ENCODE measurements at regions of chr12 and their contacts with region 1.

Region 1: DNA sequence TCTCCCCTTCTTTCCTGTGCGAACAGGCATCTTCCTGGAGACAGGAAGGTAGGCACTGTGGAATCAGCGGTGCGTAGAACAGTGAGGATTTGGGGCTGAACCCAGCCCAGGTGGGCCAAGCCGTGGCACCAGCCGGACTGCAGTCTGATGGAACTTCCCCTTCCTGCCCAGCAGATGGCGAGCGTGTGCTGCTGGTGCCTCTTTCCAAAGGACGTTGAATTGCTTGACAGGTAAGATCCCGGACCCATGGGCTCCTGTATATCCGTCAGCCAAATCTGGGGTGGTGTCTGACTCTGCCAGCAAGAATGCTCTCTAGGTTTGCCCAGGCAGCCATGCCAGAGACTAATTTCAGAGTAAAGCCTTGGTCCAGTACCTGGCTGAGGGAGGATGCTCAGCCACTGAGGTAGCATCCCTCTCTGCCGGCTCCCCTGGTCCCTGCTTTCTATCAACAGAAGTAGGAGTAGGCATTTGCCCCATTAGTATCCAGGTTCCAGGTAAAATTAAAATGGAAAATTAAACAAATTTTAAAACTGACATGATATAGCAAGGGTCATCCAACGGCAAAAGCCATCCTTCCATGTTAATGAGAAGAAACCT is 21.1 kb upstream of the KCNA5 start:
- DNase-seq: peak; percentile 70
- ATAC-seq: peak; percentile 46

Region 2: DNA sequence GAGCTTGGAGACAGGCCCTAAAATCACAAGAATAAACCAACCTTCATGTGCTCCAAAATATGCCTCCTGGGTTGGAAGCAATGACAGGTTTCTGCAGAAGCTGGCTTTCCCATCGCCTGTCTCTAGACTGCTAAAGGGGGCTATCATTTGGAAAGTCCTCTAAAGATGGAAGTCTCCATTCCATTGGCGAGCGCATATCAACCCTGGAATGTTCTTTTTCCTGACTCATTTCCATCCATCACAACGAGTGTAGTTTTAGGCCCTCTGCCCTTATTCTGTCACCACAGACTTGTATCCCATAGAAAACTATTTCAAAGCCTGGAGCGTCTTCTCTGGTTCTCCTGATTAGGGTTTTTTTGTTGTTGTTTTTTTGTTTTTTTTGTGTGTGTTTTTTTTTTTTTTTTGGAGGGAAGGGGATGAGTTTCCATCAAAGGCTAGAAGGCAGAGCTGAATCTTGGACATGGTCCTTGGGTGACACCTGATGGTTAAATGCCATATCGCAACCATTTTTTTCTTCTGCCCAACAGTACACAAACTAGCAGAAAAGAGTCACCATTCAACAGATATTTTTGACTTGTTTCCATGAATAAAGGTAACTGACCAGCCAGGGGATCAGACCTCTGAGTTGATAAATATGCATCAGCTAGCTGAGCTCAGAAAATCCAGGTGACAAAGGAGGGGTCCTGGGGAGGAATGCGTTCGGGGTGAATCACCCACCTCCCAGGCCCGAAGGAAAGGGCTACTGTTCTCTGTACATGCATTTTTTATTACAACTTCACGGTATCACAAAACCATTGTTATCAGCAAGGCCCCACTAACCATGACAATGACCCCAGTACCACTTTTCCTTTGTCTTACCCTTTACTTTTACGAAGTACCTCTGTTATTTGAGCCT is 61.6 kb after region 1 on chr12:
- intact Hi-C with region 1: loop called (anchors 1 kb)
- DNase-seq: no peak
- ATAC-seq: no peak

Measured in Right ventricle myocardium inferior (tissue), 1 donor.